T-cell (primary cell): ENCODE measurements at regions of chr18 and their contacts with region 1.

Region 1: DNA sequence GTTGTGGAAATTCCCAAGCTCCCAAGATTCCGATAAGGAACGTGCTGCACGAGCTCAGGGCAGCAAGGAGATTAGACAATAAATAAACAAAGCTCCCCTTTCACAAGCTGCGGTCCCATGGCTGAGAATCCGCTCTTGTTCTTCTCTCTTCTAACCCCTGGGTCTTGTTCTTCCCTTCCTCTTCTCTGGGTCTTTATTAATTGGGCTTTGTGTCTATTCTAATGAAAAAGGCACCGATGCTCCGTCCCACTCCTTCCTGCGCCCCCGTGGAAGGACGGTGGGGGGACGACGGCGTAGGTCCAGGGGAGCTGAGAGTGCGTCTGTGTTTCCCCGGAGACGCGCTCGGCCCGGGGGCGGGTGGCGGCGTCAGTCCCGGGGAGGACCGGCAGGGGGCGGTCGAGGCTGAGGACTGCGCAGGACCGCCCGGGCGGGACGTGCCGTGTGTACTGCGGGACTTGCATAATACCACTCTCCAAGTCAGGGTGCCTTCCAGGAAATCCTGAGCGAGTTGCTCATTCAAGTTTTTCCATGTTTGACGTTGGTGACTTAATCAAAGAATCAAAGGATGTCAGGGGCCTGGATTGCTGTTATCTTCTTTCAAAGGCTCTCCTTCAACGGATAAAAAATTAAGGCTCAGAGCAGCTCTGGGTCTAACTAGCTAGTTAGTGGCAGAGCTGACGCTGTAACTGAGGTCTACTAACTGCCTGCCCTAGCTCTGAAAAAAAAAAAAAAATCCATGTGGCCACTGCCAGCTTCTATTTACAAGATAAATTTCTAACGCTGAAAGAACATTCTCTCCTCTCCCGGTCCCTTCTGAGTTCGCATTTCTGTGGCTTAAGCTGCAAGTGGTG is 321.4 kb downstream of the TGIF1 start:
- DNase-seq: peak; percentile 30 to 76 (median 59)
- ATAC-seq: peak; percentile 95 to 97 (median 96)
- H3K4me3 ChIP-seq: peak overlapping the region; percentile 11 to 47
- H3K4me3 Mint-ChIP-seq: peak overlapping the region; percentile 37 to 64 (median 46)
- H3K27ac ChIP-seq: no peak overlapping the region
- H3K27ac Mint-ChIP-seq: no peak overlapping the region
- H3K4me1 ChIP-seq: peaks cover 0 to 9% of the 10 kb centered on the region in 2 experiments
- H3K4me1 Mint-ChIP-seq: peaks cover 12 to 16% (median 15%) of the 10 kb centered on the region in 3 donors
- H3K27me3 ChIP-seq: peaks cover 0 to 6% of the 10 kb centered on the region in 2 experiments
- H3K27me3 Mint-ChIP-seq: peaks cover 26 to 34% of the 10 kb centered on the region in 2 donors

Region 2: DNA sequence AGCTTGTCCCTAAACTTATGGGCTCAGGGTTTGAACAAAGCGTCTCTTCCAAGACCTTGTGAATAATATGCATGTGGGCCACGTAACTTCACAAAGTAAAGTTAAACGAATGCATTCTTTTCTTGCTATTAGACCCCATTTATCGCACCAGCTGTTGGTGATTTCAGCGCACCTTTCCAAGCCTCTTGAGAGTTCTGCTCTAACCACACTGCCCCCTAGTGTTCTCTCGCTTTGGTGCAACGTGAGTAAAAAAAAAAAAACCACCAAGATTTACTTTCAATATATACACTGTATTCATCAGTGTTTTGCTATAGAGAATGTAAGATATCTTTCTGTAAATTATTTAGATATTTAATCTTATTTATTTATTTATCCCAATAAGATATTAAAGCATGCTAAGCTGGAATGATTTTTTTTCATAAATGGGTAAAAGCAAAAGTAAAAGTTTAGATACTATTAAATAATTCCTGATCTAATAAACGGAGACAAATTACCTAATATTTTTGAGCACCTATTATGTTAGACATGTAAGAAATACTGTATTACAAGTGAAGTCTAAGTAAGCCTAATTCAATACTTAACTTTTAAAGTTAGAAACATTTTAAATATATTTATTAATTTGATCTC is 224.2 kb after region 1 on chr18:
- CTCF ChIA-PET with region 1: interaction called, 6 to 14 read pairs
- POLR2A ChIA-PET with region 1: no interaction called
- DNase-seq: peak in 30 of 35 experiments; percentile 4 to 76 (median 26)
- ATAC-seq: peak in 1 of 4 experiments; percentile 58
- H3K4me3 ChIP-seq: no peak overlapping the region
- H3K4me3 Mint-ChIP-seq: no peak overlapping the region
- H3K27ac ChIP-seq: no peak overlapping the region
- H3K27ac Mint-ChIP-seq: no peak overlapping the region
- H3K4me1 ChIP-seq: no peaks in the 10 kb centered on the region
- H3K4me1 Mint-ChIP-seq: peaks cover 0 to 5% (median 3%) of the 10 kb centered on the region in 3 donors
- H3K27me3 ChIP-seq: no peaks in the 10 kb centered on the region
- H3K27me3 Mint-ChIP-seq: peaks cover 0 to 2% of the 10 kb centered on the region in 2 donors

Region 3: GRCh38 chr18:5354916-5355315 is 1583.6 kb after region 1 on chr18:
- CTCF ChIA-PET with region 1: no interaction called
- POLR2A ChIA-PET with region 1: no interaction called
- DNase-seq: no peak
- ATAC-seq: no peak
- H3K4me3 ChIP-seq: no peak overlapping the region
- H3K4me3 Mint-ChIP-seq: no peak overlapping the region
- H3K27ac ChIP-seq: no peak overlapping the region
- H3K27ac Mint-ChIP-seq: no peak overlapping the region
- H3K4me1 ChIP-seq: no peaks in the 10 kb centered on the region
- H3K4me1 Mint-ChIP-seq: no peaks in the 10 kb centered on the region
- H3K27me3 ChIP-seq: no peaks in the 10 kb centered on the region
- H3K27me3 Mint-ChIP-seq: peaks cover 0 to 10% of the 10 kb centered on the region in 2 donors